Right ventricle myocardium inferior (tissue), 1 donor: ENCODE measurements at regions of chr2 and their contacts with region 1.

Region 1: DNA sequence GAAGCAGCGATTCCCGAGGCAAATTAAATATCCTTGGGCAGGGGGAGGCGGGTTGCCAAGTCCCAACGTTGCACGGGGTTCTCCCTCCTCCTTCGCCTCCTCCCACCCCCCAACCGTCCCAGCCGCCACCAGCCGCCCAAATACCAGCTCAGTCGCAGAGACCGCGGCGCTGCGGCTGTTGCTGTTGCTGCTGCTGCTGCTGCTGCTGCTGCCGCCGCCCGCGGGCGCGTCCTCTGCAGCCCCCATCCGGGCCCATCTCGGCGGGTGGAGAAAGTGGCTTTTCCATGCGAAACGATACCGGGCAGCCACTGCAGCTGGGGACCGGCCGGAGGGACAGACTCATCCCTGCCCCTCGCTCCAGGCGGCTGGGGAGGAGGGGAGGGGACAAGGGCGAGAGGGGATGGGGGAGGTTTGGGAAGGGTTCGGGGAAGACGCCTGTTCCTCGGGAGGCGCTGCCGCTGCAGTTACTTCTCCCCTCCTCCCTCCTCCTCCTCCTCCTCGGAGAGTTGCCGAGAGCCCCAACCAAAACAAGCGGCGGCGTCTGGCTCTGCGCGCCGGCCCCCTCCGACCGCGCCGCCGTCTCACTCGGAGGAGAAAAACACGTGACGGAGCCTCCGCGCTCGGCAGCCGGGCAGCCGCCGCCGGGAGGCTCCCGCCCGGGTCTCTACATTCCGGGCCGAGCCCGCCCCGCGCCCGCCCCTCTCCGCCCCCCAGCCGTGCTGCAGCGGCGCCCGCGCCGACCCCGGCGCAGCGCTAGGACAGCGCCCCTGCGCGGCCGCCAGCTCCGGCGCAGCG is at the start of gene IRS1:
- DNase-seq: peak; percentile 84
- ATAC-seq: peak; percentile 56
- total RNA-seq, gene IRS1: 15.9 TPM

Region 2: GRCh38 chr2:225668606-225669266 is 1130.6 kb before region 1 on chr2:
- intact Hi-C with region 1: loop called (anchors 2 kb)
- DNase-seq: no peak
- ATAC-seq: no peak

Region 3: DNA sequence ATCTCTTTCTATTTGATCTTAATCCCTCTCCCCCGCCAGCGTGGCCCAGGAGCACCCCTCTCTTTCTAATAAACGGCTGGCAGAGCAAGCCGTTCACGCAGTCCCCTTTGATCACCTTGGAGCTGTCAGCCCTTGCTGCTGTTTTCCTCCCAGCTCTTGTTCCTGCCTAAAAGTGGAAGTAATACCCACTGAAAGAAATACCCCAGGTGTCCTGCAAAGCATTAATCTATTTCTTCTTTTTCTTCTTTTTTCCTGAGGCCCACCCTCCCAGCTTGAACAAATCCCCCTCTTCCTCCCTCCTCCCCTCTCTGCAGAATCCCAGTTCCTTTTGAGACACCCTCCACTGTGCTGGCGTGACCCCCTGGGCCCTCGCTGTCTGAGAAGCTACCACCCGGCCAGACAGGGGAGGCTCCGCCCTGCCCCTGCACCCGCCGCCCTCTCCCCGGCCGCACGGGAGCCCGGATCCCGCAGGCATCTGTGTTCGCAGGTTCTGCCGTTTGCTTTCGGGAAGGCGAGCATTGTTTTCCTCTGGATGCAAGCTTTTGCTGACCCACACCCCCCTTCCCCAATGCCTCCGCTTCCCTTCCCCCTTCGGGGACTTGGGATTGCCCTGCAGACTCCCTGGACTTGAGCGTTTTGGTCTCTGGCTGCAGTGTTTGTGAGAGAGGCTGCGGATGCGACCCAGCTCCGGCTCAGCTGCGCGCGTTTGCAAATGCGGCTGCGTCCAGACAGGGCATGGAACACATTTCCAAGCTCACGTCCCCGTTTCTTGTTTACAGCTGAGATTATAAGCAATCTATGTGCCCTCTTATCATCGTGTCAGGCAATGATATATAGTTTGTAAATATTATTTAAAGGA is 768.4 kb before region 1 on chr2:
- intact Hi-C with region 1: loop called (anchors 5 kb)
- DNase-seq: peak; percentile 88
- ATAC-seq: peak; percentile 95

Region 4: DNA sequence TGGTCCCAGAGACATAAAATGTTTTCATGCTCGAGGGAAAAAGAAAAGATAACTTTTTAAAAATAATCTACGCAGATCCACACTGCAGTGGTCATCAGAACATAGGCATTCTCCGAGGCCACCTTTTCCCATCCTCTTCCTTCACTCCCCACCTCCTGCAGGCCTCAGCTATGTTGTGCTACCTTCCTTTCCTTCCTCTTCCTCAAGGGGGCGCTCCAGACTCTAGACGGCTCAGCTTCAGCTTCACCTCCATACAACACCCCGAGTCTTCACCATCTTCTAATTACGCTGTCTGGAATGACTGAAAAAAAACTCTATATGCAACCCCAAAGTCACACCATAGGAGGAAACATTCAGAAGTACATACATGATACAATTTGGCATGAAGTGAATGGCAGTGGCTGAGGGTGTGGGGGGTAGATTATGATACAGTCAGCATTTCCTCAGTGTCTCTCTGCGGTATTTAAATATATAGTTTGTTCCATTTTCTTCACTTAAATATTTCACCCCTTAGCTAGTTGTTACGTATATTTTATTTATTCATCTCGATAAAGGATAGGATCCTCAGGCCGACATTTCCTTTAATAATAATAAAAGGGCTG is 583.4 kb before region 1 on chr2:
- intact Hi-C with region 1: loop called (anchors 2 kb)
- DNase-seq: no peak
- ATAC-seq: peak; percentile 79

Region 5: GRCh38 chr2:226835796-226836547 is 36.6 kb after region 1 on chr2 and contains the start of gene RHBDD1:
- intact Hi-C with region 1: loop called (anchors 2 kb)
- DNase-seq: peak; percentile 97
- ATAC-seq: peak; percentile 99
- total RNA-seq, gene RHBDD1: 30.5 TPM